AG04449 (cell line): ENCODE measurements at regions of chr5 and their contacts with region 1.

Region 1: GRCh38 chr5:115309751-115310370 is 13.4 kb upstream of the CCDC112 start:
- DNase-seq: no peak
- H3K4me3 ChIP-seq: no peak overlapping the region
- CTCF ChIP-seq: peak; percentile 32

Region 2: DNA sequence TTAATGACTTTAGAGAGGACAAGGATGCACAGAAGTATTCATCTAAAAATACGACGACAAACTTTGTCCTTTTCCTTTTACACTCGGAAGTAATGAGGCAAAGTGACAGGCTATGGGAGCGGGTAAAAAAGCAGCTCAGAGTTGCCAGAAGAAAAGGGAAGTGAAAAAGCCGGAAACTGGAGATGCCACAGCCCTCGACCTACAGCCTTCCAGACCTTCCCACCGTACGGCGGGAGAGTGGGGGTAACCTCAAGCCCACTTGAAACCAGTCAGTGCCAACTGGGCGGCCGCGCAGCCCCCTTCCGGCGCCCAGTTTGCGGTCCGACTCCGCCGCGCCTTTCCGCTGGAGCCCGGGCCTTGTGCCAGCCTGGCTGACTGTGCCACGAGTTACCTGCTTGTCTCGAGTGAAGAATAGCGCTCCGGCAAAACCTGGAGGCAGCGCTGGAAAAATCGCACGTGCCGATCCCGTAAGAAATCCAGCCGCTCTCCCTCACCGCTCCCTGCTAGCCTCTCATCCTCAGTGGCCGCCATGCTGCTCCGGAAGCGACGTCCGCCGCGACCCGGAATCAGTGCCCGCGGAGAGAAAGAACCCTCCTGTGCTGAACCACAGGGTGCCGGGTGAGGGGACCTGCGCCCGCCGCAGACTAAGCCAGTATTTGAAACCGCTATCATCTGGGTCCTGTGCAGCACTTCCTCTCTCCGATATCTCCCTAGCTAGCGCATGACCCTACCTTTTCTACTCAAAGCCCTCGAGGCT is 47.4 kb before region 1 on chr5 and contains the start of gene PGGT1B:
- CTCF ChIA-PET with region 1: no interaction called
- POLR2A ChIA-PET with region 1: no interaction called
- DNase-seq: no peak
- H3K4me3 ChIP-seq: peak within 1 kb of the TSS; percentile 81
- CTCF ChIP-seq: no peak

Region 3: DNA sequence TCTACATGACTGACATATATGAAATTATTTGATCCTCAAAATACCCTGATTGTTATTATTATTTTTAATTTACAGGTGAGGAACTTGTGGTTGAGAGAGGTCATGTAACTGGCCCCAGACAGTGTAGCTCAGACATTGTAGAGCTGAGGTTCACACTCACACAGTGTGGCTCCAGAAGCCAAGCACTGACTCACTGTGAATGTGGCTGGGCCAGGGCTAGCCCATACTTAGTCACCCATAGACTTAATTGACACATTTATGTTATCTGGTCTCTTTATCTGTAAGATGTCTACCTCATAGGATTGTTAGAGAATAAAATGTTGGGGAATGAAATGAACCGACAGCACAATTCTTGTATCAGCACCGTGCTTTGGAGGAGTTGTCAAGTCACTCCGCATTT is 11.4 kb after region 1 on chr5:
- CTCF ChIA-PET with region 1: interaction called, 30 read pairs
- POLR2A ChIA-PET with region 1: no interaction called
- DNase-seq: no peak
- H3K4me3 ChIP-seq: no peak overlapping the region
- CTCF ChIP-seq: no peak

Region 4: GRCh38 chr5:115544436-115545350 is 234.8 kb after region 1 on chr5 and contains the start of gene FEM1C:
- CTCF ChIA-PET with region 1: interaction called, 21 read pairs
- POLR2A ChIA-PET with region 1: no interaction called
- DNase-seq: peak; percentile 78
- H3K4me3 ChIP-seq: peak within 1 kb of the TSS; percentile 78
- CTCF ChIP-seq: no peak

Region 5: GRCh38 chr5:115586601-115587048 is 276.8 kb after region 1 on chr5:
- CTCF ChIA-PET with region 1: interaction called, 159 read pairs
- POLR2A ChIA-PET with region 1: no interaction called
- DNase-seq: no peak
- H3K4me3 ChIP-seq: no peak overlapping the region
- CTCF ChIP-seq: no peak

Region 6: GRCh38 chr5:115624994-115625393 is 315.1 kb after region 1 on chr5:
- CTCF ChIA-PET with region 1: interaction called, 19 read pairs
- POLR2A ChIA-PET with region 1: no interaction called
- DNase-seq: no peak
- H3K4me3 ChIP-seq: peak overlapping the region; percentile 85
- CTCF ChIP-seq: no peak